ENCODE measurements at regions of chr11 and their contacts with region 1.

Region 1: GRCh38 chr11:111870886-111871692 is at the start of gene ALG9:
- DNase-seq: peak; percentile 76
- ATAC-seq: peak; percentile 90
- H3K4me3 Mint-ChIP-seq: peak within 1 kb of the TSS; percentile 89
- H3K27ac Mint-ChIP-seq: peak within 1 kb of the TSS; percentile 39
- H3K4me1 Mint-ChIP-seq: peaks cover 12% of the 10 kb centered on the region
- H3K27me3 Mint-ChIP-seq: no peaks in the 10 kb centered on the region; the same call in 1 of the 2 replicates
- CTCF ChIP-seq: no peak
- total RNA-seq, gene ALG9: 19.7 to 20.9 TPM (median 20.6 TPM) in 3 replicates

Region 2: GRCh38 chr11:111735262-111736116 is 135.6 kb before region 1 on chr11:
- CTCF ChIA-PET with region 1: no interaction called
- POLR2A ChIA-PET with region 1: no interaction called
- DNase-seq: no peak
- ATAC-seq: no peak
- H3K4me3 Mint-ChIP-seq: no peak overlapping the region
- H3K27ac Mint-ChIP-seq: peak overlapping the region; percentile 64; the same call in 1 of the 2 replicates
- H3K4me1 Mint-ChIP-seq: peaks cover 2% of the 10 kb centered on the region; the same call in 1 of the 2 replicates
- H3K27me3 Mint-ChIP-seq: no peaks in the 10 kb centered on the region
- CTCF ChIP-seq: no peak

Region 3: GRCh38 chr11:111801135-111801534 is 70.0 kb before region 1 on chr11:
- CTCF ChIA-PET with region 1: no interaction called
- POLR2A ChIA-PET with region 1: no interaction called
- DNase-seq: no peak
- ATAC-seq: no peak
- H3K4me3 Mint-ChIP-seq: no peak overlapping the region
- H3K27ac Mint-ChIP-seq: no peak overlapping the region
- H3K4me1 Mint-ChIP-seq: peaks cover 6% of the 10 kb centered on the region; the same call in 1 of the 2 replicates
- H3K27me3 Mint-ChIP-seq: no peaks in the 10 kb centered on the region
- CTCF ChIP-seq: no peak

Region 4: DNA sequence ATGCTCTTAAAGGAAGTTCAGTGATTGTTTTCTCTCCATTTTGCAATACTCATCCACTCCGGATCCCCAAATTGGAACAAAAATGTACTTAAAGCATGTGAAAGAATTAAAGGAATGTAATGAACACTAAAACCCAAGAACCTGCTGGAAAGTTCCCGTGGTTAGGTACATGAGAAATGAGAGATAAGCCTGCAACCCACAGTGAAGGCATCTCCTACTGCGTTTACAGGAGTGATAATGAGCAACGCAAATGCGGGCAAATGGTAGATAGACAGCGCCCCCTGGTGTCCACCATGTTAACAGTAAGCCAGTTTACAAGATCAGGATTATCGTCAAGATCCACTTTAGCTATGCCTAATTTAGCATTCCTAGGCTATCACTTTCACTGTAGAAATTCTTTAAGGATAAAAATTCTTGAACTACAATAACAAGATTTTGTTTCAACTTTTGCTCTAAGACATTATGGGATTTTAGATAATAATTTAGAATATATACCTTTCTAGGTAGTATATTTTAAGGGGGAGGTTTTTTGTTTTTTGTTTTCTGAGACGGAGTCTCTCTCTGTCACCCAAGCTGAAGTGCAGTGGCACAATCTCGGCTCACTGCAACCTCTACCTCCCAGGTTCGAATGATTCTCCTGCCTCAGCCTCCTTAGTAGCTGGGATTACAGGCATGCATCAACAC is 29.6 kb before region 1 on chr11:
- CTCF ChIA-PET with region 1: interaction called, 18 read pairs
- POLR2A ChIA-PET with region 1: interaction called, 4 read pairs
- DNase-seq: peak; percentile 92
- ATAC-seq: peak; percentile 91
- H3K4me3 Mint-ChIP-seq: no peak overlapping the region
- H3K27ac Mint-ChIP-seq: no peak overlapping the region
- H3K4me1 Mint-ChIP-seq: peaks cover 20% of the 10 kb centered on the region
- H3K27me3 Mint-ChIP-seq: no peaks in the 10 kb centered on the region
- CTCF ChIP-seq: peak; percentile 94

Region 5: GRCh38 chr11:111918390-111919258 is 47.5 kb after region 1 on chr11 and contains the start of gene C11orf52:
- CTCF ChIA-PET with region 1: interaction called, 8 read pairs
- POLR2A ChIA-PET with region 1: interaction called, 12 read pairs
- DNase-seq: peak; percentile 80
- ATAC-seq: peak; percentile 97
- H3K4me3 Mint-ChIP-seq: peak within 1 kb of the TSS; percentile 57
- H3K27ac Mint-ChIP-seq: peak within 1 kb of the TSS; percentile 85
- H3K4me1 Mint-ChIP-seq: peaks cover 42% of the 10 kb centered on the region
- H3K27me3 Mint-ChIP-seq: no peaks in the 10 kb centered on the region; the same call in 1 of the 2 replicates
- CTCF ChIP-seq: no peak
- total RNA-seq, gene C11orf52: 2.1 to 4.2 TPM (median 3.0 TPM) in 3 replicates

Region 6: GRCh38 chr11:111926505-111927391 is 55.7 kb after region 1 on chr11:
- CTCF ChIA-PET with region 1: interaction called, 15 read pairs
- POLR2A ChIA-PET with region 1: interaction called, 18 read pairs
- DNase-seq: peak; percentile 97
- ATAC-seq: peak; percentile 94
- H3K4me3 Mint-ChIP-seq: peak overlapping the region; percentile 74
- H3K27ac Mint-ChIP-seq: peak overlapping the region; percentile 96
- H3K4me1 Mint-ChIP-seq: peaks cover 28% of the 10 kb centered on the region
- H3K27me3 Mint-ChIP-seq: no peaks in the 10 kb centered on the region
- CTCF ChIP-seq: no peak

Region 7: DNA sequence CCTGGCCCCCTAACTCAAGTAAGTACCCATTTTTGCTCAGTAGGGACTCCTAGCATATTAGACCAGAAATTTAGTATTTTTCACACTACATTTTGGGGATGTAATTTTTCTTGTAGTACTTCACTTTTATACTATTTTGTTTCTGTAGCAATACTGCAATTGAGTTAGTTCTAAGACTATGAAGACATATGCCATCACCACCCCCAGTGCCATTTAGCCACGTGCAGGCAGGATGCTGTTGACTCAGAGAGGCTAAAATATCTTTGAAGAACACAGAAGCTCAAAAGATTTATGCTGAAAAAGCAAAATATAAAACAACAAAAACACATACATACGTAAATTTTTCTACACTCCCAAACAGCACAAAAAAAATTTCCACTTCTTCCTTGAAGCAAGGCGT is 125.0 kb after region 1 on chr11:
- CTCF ChIA-PET with region 1: interaction called, 11 read pairs
- POLR2A ChIA-PET with region 1: no interaction called
- DNase-seq: no peak
- ATAC-seq: no peak
- H3K4me3 Mint-ChIP-seq: no peak overlapping the region
- H3K27ac Mint-ChIP-seq: no peak overlapping the region
- H3K4me1 Mint-ChIP-seq: no peaks in the 10 kb centered on the region
- H3K27me3 Mint-ChIP-seq: no peaks in the 10 kb centered on the region
- CTCF ChIP-seq: no peak

Region 8: DNA sequence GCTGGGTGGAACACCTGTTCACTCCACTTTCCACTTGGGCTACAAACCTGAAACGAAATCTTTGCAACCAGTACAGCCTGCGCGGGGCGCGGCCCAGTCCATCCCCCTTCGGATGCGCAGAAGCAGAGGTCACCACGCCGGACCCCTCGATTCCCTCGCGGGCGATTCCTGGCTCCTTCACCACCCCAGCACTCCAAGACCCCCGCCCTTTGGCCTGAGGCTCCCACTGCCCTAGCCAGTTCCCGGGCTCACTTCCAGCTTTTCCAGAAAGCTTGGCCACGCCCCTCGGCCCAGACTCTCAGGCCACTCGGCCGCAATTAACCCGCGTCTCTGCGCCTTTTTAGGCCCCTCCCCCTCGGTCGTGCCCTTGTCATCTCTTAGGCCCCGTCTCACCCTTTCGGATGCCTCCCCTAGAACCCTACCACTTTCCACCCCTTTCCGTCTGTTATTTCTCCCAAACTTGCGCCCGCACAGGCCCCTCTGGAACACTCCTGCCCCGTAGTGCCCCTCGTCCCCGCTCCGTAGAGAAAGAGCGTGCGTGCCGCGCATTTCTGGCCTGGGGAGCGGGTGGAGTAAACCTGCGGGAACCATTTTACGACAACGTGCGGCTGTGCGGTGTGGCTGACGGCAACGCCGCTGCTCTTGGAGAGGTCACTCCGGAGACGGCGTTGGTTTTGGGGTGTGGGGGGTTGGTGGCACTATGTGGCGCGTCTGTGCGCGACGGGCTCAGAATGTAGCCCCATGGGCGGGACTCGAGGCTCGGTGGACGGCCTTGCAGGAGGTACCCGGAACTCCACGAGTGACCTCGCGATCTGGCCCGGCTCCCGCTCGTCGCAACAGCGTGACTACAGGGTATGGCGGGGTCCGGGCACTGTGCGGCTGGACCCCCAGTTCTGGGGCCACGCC is 153.9 kb after region 1 on chr11 and contains the start of gene DLAT:
- CTCF ChIA-PET with region 1: interaction called, 10 read pairs
- POLR2A ChIA-PET with region 1: no interaction called
- DNase-seq: peak; percentile 98
- ATAC-seq: peak; percentile 94
- H3K4me3 Mint-ChIP-seq: peak within 1 kb of the TSS; percentile 98
- H3K27ac Mint-ChIP-seq: peak within 1 kb of the TSS; percentile 99
- H3K4me1 Mint-ChIP-seq: peaks cover 13% of the 10 kb centered on the region
- H3K27me3 Mint-ChIP-seq: no peaks in the 10 kb centered on the region
- CTCF ChIP-seq: no peak
- total RNA-seq, gene DLAT: 55.7 to 60.4 TPM (median 56.6 TPM) in 3 replicates

Measured in WTC11 (cell line).